Activated CD4-positive, alpha-beta T cell treated with anti-CD3 and anti-CD28 coated beads, Interleukin-2, amount 10 ng/mL, durations not matched to agents 24 days and 14 days (primary cell): ENCODE measurements at regions of chr7 and their contacts with region 1.

Region 1: GRCh38 chr7:73718905-73719805 is at the start of gene STX1A:
- DNase-seq: peak; percentile 93
- H3K4me3 Mint-ChIP-seq: peak within 1 kb of the TSS; percentile 92
- H3K27ac Mint-ChIP-seq: peak within 1 kb of the TSS; percentile 91
- H3K4me1 Mint-ChIP-seq: peaks cover 33% of the 10 kb centered on the region
- H3K27me3 Mint-ChIP-seq: peaks cover 19% of the 10 kb centered on the region
- total RNA-seq, gene STX1A: 19.0 and 19.4 TPM in 2 replicates

Region 2: DNA sequence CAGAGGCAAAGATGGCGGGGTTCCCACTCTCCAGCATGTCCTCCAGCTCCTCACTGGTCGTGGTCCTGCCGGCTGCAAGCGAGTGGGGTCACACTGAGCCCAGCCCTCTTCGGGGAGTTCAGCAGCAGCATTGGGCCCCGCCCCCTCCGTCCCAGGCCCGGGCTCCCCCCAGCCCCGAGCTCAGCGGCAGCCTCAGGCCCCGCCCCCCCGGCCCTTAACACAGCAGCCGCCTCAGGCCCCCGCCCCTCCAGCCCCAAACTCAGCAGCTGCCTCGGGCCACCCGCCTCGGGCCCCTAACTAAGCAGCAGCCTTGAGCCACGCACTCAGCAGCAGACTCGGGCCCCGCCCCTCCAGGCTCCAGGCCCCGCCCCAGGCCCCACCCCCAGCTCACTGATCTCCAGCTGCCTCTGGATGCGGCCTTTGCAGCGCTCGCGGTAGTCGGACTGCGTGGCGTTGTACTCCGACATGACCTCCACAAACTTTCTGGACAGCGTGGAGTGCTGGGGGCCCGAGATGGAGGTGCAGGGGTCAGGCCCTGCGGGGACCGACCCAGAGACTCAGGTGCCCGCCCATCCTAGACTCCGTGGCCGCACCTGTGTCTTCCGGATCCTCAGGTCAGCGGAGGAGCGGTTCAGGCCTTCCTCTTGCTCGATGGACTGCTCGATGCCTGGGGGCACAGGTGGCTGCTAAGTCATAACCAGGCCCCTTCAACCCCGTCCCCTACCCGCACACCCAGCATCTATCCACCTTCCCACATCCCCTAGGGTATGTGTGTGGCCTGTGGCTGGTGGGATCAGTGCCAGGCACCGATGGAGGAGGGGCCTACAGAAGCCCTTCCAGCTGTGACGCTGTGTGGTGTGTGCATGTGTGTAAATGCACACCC is 15.2 kb before region 1 on chr7:
- intact Hi-C with region 1: loop called (anchors 1 kb)
- DNase-seq: peak; percentile 76
- H3K4me3 Mint-ChIP-seq: no peak overlapping the region
- H3K27ac Mint-ChIP-seq: no peak overlapping the region
- H3K4me1 Mint-ChIP-seq: peaks cover 8% of the 10 kb centered on the region
- H3K27me3 Mint-ChIP-seq: no peaks in the 10 kb centered on the region